ENCODE measurements at regions of chr17 and their contacts with region 1.

Region 1: DNA sequence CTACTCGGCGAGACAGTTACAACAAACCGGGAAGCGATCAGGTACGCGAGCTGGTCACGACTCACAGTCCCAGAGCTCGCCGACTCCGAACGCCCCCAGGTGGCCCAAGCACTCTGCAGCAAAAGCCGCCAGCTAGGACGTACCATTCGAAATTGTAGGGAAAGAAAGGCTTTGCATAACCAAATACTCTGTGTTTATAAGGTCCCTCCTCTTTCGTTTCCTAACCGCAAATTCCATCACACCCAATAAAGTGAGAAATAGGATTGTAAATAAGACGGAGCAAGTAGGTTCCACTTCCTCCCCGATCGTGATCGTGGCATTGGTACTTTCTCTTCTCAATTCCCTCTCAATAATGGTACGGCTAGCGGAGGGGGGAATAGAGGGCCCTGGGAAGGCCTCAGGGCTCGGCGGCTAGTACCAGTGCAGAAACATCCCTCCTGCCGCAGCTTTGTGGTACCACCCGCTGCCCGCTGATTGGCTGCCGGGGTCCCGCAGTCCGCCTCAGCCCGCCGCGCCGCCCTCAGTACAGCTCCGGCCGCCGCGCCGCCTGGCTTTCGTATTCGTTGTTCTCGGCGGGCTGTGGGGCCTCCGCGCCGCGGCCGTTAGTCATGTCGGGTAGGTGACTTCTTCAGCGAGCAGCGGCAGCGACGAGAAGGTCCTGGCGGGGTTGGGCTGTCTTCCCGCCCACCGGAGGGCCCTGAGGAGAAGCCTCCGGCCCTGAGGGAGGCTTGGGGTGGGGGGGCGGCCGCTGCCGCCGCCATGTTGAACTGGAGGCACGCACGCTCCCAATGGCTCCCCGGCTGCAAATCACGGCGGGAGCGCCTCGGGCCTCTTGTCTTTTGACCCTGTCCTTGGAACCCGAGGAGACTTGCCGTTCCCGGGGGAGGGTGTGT is at the start of gene TAF15:
- DNase-seq: peak; percentile 96
- ATAC-seq: peak; percentile 98 to 99
- total RNA-seq, gene TAF15: 97.3 to 119 TPM

Region 2: DNA sequence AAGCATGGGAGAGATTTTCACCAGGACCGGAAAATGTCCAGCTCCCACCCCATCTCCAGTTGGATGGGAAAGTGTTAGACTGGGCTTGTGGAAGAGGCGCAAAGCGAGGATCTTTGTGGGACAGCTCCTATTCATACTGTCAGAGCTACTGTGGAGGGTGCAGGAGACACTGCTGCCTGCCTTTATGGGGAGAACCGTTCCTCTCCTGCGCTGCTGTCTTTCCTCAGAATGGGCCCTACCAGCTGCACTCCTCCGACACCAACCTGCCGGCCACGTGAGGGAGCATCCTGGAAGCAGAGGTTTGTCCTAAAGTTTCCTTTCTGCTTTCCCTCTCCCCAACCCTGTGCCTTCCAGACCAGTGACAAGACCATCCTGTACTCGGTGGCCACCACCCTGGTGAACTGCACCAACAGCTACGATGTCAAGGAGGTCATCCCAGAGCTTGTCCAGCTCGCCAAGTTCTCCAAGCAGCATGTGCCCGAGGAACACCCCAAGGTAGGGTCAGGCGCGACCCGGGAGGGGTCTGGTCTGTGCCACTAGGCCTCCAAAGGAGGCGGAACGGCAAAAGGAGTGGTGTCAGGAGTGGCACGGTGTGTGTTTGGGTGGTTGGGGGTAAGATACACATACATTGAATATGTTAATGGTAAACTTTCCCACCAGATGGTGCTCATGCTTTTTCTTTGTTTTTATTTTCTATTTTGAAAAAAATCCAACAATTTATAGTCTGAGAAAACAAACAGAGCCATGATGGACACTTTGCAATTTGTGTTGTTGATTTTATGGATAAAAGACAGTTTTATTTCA is 638.0 kb before region 1 on chr17:
- intact Hi-C with region 1: no loop called
- DNase-seq: no peak
- ATAC-seq: no peak

Region 3: DNA sequence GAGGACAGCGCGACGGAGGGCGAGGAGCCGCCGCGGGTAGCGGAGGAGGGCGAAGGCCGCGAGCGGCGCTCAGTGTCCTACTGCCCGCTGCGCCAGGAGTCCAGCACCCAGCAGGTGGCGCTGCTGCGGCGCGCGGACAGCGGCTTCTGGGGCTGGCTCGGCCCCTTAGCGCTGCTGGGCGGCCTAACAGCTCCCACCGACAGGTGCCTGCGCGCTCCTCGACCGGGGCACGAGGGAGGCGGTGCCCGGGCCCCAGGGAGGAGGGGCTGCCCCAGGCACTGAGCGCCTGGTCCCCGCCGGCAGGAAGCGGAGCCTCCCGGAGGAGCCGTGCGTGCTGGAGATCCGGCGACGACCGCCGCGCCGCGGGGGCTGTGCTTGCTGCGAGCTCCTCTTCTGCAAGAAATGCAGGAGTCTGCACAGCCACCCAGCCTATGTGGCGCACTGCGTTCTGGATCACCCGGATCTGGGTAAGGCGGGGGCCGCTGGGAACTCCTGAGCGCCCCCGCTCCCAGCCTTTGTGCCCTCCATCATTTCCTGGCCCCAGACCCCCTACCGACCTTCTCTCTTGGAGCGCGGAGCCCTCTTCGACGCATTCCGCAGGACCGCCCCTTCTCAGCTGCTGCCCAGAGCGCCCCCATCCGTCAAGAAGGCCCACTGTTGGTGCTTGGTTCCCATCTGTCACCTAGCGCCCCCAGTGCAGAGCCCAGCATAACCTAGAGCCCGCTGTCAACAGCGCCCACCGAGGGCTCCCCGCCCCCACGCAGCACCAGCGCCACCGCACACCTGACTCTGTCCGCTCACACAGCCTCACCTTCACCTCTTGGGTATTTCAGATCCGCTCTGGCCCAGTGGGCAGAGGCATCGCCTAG is 44.9 kb before region 1 on chr17:
- intact Hi-C with region 1: loop called (anchors 1 to 2 kb)
- DNase-seq: peak; percentile 90
- ATAC-seq: peak; percentile 93 to 95

Region 4: DNA sequence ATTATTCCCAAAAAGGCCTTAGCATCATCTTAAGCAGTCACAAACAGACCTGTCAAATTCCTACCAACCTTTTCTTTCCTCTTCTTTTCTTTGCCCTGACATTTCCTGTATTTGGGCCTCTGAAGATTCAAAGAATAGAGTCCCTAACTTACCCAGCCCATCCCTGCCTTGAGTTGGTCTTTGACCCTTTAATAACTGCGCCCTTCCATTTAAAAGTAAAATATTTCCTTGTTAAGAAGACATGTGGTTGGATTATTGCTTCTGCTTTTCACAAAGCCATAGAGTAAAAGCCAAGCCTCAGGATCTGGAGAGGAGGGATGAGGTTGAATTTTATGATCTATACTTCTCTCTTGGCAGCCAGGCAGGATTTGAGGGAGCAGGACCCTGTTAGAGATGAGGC is 221.7 kb after region 1 on chr17:
- intact Hi-C with region 1: no loop called
- DNase-seq: no peak
- ATAC-seq: no peak

Region 5: DNA sequence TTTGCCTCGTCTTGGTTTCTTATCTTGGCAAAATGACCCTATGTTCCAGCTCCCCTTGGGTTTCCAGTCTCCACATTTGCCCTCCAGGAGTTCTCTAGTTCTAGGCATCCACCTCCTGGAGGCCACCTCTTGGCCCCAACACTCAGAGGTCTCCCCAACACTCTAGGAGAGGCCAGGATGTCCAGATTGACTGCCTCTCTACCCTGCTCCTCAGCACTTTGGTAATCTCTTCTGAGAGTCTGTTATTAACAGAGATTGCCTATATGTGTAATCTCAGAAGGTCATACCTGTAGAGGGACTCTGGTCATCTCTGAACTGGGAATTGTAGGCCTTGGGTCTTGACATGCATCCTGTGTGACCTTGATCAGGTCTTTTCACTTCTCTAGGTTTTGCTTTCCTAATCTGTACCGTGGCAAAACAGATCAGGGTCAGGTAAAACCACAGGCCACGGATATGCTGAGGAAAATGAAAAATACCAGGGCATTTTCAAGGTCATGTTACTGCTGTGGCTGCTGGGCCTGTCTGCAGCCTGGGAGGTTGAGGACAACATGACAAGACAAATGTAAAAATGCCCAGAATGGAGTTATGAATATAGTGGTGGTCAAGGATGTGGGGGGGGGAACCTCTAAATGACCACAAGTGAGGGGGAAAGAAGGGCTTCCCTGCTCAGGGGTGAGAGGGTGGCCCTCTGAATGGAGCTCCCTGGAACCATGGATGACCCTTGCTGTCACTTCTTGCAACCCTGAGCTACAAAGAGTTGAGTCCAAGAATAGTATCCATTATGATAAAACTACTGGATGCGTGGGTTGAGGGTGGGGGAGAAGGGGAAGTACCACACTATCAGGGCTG is 396.7 kb after region 1 on chr17:
- intact Hi-C with region 1: no loop called
- DNase-seq: no peak
- ATAC-seq: no peak